GM13977 (cell line): ENCODE measurements at regions of chr3 and their contacts with region 1.

Region 1: DNA sequence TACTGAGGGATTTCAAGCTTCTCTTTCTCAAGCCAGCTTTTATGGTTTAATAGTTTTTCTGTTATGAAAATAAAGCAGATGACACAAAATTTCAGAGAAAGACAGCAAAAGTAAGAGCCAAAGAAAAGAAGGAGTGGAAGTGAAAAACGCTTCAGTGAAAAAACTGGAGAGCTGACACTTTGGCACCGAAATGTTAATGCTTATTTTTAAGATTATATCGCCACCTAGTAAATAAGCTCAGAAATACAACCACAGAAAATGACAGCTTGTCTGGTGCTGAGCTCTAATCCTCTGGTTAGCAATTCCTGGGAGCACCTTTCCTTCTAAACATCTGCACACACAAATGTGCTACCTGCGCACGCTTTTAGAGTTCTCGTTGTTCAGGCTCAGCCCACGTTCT is 101.6 kb downstream of the ZPLD1 start:
- DNase-seq: peak; percentile 31
- CTCF ChIP-seq: peak; percentile 49

Region 2: GRCh38 chr3:101676765-101677435 is 859.6 kb before region 1 on chr3 and contains the start of gene ZBTB11:
- in situ Hi-C with region 1: loop called (anchors 25 kb)
- DNase-seq: peak; percentile 97
- CTCF ChIP-seq: peak; percentile 38

Region 3: DNA sequence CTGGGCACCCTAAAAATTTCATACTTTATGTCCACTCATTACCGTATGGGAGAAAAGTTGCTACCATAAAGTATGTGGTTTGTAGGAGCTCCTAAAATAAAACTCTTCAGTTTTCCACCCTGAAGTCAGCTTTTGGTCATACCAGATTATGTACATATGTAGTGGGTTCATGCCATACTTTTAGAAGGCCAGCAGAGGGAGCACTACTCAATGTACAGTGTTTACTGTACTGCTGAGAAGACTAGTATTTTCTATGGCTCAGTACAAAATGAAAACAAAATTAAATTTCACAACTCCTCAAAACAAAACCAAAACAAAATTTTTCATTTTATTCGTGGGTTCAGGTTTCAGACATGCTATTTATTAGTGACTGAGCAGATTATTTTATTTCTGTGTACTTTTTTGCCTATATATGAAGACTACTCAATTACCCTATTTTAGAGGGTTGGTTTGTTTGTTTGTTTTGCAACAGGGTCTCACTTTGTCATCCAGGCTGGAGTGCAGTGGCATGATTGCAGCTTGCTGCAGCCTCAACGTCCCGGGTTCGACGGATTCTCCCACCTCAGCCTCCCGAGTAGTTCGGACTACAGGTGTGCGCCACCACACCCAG is 733.2 kb before region 1 on chr3:
- in situ Hi-C with region 1: loop called (anchors 10 kb)
- DNase-seq: peak; percentile 59
- CTCF ChIP-seq: peak; percentile 73

Region 4: DNA sequence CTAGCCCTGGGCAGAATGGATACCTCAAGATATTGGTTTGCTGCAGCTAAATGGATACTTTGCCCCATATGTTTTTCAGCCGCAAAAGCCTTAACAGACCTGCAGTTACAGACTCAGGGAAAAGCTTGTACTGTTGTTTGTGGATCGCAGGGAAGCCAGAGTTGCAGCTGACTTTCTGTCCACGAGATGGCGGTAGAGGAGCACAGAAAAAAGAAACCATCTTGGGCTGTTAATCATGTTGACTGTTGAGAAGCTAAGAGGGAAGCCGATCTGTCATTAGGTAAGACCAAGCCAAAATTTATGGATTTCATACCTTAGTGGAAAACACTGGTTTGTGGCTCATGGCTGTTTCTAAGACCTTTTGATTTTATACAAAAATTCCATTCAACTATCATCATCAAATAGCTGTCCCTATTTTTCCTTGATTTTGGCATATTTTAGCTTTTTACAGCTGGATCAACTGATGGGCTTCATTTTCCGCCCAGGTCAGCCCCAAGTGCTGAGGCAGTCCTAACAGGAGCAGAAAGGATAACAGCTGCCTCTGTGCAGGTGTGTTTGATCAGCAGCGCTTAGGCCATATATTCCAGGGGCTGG is 307.3 kb before region 1 on chr3:
- in situ Hi-C with region 1: loop called (anchors 5 kb)
- DNase-seq: peak; percentile 28
- CTCF ChIP-seq: peak; percentile 92

Region 5: GRCh38 chr3:103067963-103068362 is 531.5 kb after region 1 on chr3:
- in situ Hi-C with region 1: no loop called
- DNase-seq: no peak
- CTCF ChIP-seq: no peak